ENCODE measurements at regions of chr17 and their contacts with region 1.

Region 1: DNA sequence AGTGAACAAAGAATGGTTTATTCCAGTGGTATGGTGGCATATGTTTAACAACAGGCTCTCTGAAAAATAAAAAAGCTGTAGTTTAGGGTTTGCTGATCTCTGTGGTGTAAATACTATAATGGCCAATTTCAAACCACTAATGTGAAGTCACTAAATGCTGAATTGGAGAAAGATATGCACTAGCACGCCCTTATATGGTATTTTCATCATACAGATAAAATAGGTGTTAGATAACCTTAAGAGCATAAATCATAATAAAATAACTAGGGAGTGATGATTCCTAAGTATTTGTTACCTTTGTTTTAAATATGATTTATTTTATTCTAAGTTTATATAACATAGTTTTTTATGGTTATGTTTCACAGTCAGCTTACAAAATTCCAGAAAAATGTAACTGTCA is 17.2 kb downstream of the NLK start:
- DNase-seq: no peak
- H3K4me3 ChIP-seq: no peak overlapping the region
- H3K27ac ChIP-seq: no peak overlapping the region
- H3K4me1 ChIP-seq: no peaks in the 10 kb centered on the region; a peak in 3 of 4 replicates
- H3K27me3 ChIP-seq: no peaks in the 10 kb centered on the region
- CTCF ChIP-seq: no peak
- EP300 ChIP-seq: no peak
- RAD21 ChIP-seq: no peak

Region 2: GRCh38 chr17:27907976-27908558 is 151.6 kb before region 1 on chr17:
- CTCF ChIA-PET with region 1: no interaction called
- POLR2A ChIA-PET with region 1: no interaction called
- DNase-seq: no peak
- H3K4me3 ChIP-seq: no peak overlapping the region
- H3K27ac ChIP-seq: no peak overlapping the region
- H3K4me1 ChIP-seq: peaks cover 0 to 14% of the 10 kb centered on the region in 2 experiments; a peak in 1 of 4 replicates
- H3K27me3 ChIP-seq: peaks cover 5% of the 10 kb centered on the region; the same call in 1 of the 2 replicates
- CTCF ChIP-seq: no peak
- EP300 ChIP-seq: no peak
- RAD21 ChIP-seq: no peak

Region 3: GRCh38 chr17:28018439-28019070 is 41.1 kb before region 1 on chr17:
- CTCF ChIA-PET with region 1: no interaction called
- POLR2A ChIA-PET with region 1: no interaction called
- DNase-seq: no peak
- H3K4me3 ChIP-seq: no peak overlapping the region
- H3K27ac ChIP-seq: no peak overlapping the region
- H3K4me1 ChIP-seq: no peaks in the 10 kb centered on the region
- H3K27me3 ChIP-seq: no peaks in the 10 kb centered on the region
- CTCF ChIP-seq: no peak
- EP300 ChIP-seq: no peak
- RAD21 ChIP-seq: no peak

Region 4: GRCh38 chr17:28071891-28072606 is 12.4 kb after region 1 on chr17:
- CTCF ChIA-PET with region 1: interaction called, 10 read pairs
- POLR2A ChIA-PET with region 1: no interaction called
- DNase-seq: no peak
- H3K4me3 ChIP-seq: no peak overlapping the region
- H3K27ac ChIP-seq: no peak overlapping the region
- H3K4me1 ChIP-seq: peaks cover 0 to 2% of the 10 kb centered on the region in 2 experiments; a peak in 2 of 4 replicates
- H3K27me3 ChIP-seq: no peaks in the 10 kb centered on the region
- CTCF ChIP-seq: no peak
- EP300 ChIP-seq: no peak
- RAD21 ChIP-seq: no peak

Region 5: GRCh38 chr17:28133562-28133970 is 73.9 kb after region 1 on chr17:
- CTCF ChIA-PET with region 1: no interaction called
- POLR2A ChIA-PET with region 1: no interaction called
- DNase-seq: no peak
- H3K4me3 ChIP-seq: no peak overlapping the region
- H3K27ac ChIP-seq: peak overlapping the region in 1 of 2 experiments; percentile 95; a peak in 2 of 4 replicates
- H3K4me1 ChIP-seq: peaks cover 0 to 4% of the 10 kb centered on the region in 2 experiments; a peak in 2 of 4 replicates
- H3K27me3 ChIP-seq: no peaks in the 10 kb centered on the region
- CTCF ChIP-seq: no peak
- EP300 ChIP-seq: peak in 1 of 2 experiments; percentile 83; a peak in 2 of 4 replicates
- RAD21 ChIP-seq: no peak

Measured in SK-N-SH (cell line).